PC-3 (cell line): ENCODE measurements at regions of chr12 and their contacts with region 1.

Region 1: GRCh38 chr12:113422030-113422885 is at the start of gene SDSL:
- DNase-seq: peak; percentile 96
- ATAC-seq: peak; percentile 99
- H3K4me3 ChIP-seq: peak within 1 kb of the TSS; percentile 80
- H3K27ac ChIP-seq: peak within 1 kb of the TSS; percentile 78
- H3K4me1 ChIP-seq: peaks cover 22% of the 10 kb centered on the region
- H3K27me3 ChIP-seq: no peaks in the 10 kb centered on the region
- CTCF ChIP-seq: no peak
- total RNA-seq, gene SDSL: 14.0 and 19.9 TPM in 2 replicates

Region 2: GRCh38 chr12:113190761-113191160 is 231.5 kb before region 1 on chr12:
- CTCF ChIA-PET with region 1: no interaction called
- POLR2A ChIA-PET with region 1: interaction called, 4 read pairs
- intact Hi-C with region 1: loop called (anchors 5 kb)
- DNase-seq: peak; percentile 54
- ATAC-seq: peak; percentile 10; the same call in 1 of the 2 replicates
- H3K4me3 ChIP-seq: no peak overlapping the region
- H3K27ac ChIP-seq: no peak overlapping the region
- H3K4me1 ChIP-seq: peaks cover 29% of the 10 kb centered on the region
- H3K27me3 ChIP-seq: no peaks in the 10 kb centered on the region
- CTCF ChIP-seq: no peak

Region 3: GRCh38 chr12:113310489-113310888 is 111.8 kb before region 1 on chr12:
- CTCF ChIA-PET with region 1: interaction called, 5 read pairs
- POLR2A ChIA-PET with region 1: no interaction called
- intact Hi-C with region 1: loop called (anchors 1 kb)
- DNase-seq: peak; percentile 51
- ATAC-seq: no peak
- H3K4me3 ChIP-seq: no peak overlapping the region
- H3K27ac ChIP-seq: no peak overlapping the region
- H3K4me1 ChIP-seq: peaks cover 25% of the 10 kb centered on the region
- H3K27me3 ChIP-seq: no peaks in the 10 kb centered on the region
- CTCF ChIP-seq: peak; percentile 54

Region 4: GRCh38 chr12:113358381-113359132 is 63.7 kb before region 1 on chr12 and contains the start of gene PLBD2:
- CTCF ChIA-PET with region 1: interaction called, 3 read pairs
- POLR2A ChIA-PET with region 1: no interaction called
- intact Hi-C with region 1: loop called (anchors 2 kb)
- DNase-seq: peak; percentile 93
- ATAC-seq: peak; percentile 91
- H3K4me3 ChIP-seq: peak within 1 kb of the TSS; percentile 86
- H3K27ac ChIP-seq: peak within 1 kb of the TSS; percentile 13; the same call in 1 of the 2 replicates
- H3K4me1 ChIP-seq: peaks cover 12% of the 10 kb centered on the region
- H3K27me3 ChIP-seq: no peaks in the 10 kb centered on the region
- CTCF ChIP-seq: no peak
- total RNA-seq, gene PLBD2: 18.8 and 38.1 TPM in 2 replicates

Region 5: DNA sequence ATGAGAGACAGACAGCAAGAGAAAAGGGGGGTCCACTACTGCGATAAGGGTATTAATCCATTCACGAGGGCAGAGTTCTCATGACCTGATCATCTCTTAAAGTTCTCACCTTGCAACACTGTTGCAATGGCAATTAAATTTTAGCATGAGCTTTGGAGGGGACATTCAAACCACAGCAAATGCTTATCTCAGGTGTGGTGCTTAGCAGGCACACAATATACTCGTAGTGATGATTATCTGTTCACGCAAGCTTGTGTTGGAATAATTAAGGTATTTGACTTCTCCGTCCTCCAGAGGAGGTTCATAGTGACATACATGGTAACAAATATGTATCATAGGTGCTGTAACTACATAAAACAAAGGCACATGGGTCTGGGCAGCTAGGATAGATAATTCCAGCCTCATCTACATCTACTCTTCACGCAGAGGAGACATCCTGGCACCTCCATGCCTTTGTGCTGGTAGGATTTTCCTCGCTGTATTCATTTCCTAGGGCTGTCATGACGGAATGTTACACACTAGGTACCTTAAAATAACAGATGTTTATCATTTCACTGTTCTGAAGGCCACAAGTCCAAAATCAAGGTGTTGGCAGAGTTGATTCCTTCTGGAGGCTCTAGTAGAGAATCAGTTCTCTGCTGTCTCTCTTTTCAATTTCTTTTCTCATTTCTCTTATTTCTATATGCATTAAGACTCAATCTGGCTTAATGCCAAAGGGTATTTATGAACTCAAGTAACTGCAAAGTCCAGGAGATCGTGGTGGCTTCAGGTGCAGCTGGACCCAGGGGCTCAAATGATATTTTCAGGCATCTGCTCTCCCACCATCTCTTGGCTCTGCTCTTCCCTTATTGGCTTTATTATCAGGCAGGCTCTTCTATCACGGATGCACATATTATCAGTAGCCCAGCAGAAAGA is 322.8 kb after region 1 on chr12:
- CTCF ChIA-PET with region 1: no interaction called
- POLR2A ChIA-PET with region 1: interaction called, 10 read pairs
- intact Hi-C with region 1: no loop called
- DNase-seq: no peak
- ATAC-seq: no peak
- H3K4me3 ChIP-seq: no peak overlapping the region
- H3K27ac ChIP-seq: no peak overlapping the region
- H3K4me1 ChIP-seq: no peaks in the 10 kb centered on the region
- H3K27me3 ChIP-seq: no peaks in the 10 kb centered on the region
- CTCF ChIP-seq: no peak